B cell (primary cell): ENCODE measurements at regions of chr15 and their contacts with region 1.

Region 1: DNA sequence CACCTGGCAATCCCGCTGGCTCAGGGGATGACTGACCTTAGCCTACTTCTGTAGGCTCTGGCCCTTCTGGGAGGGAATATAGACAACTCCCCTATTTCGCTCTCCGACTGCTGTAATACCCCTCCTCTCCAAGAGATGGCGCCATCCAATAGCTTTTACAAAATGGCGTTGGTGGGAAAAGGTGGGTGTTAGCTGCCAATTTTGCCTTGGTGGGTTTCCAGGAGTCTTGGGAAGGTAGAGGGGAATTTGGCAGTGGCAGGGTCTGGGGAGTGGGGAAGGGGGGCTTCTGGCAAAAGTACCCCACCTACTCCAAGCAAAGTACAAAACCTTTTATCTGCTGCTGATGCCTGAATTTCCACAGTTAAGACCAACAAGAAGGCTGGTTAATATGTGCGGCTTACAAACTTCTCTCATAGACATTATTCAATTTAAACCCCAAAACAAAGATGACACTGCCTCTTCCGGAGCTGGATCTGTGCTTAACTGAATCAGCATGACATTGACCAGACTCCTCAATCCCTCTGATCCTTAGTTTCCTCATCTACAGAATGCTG is 62.1 kb downstream of the RASGRF1 start:
- DNase-seq: peak; percentile 62
- ATAC-seq: peak; percentile 42
- H3K4me3 ChIP-seq: no peak overlapping the region
- H3K4me3 Mint-ChIP-seq: no peak overlapping the region
- H3K27ac ChIP-seq: no peak overlapping the region
- H3K27ac Mint-ChIP-seq: no peak overlapping the region
- H3K4me1 ChIP-seq: peaks cover 5 to 9% of the 10 kb centered on the region in 2 donors
- H3K4me1 Mint-ChIP-seq: peaks cover 9% of the 10 kb centered on the region
- H3K27me3 ChIP-seq: no peaks in the 10 kb centered on the region
- H3K27me3 Mint-ChIP-seq: no peaks in the 10 kb centered on the region
- CTCF ChIP-seq: peak; percentile 83

Region 2: DNA sequence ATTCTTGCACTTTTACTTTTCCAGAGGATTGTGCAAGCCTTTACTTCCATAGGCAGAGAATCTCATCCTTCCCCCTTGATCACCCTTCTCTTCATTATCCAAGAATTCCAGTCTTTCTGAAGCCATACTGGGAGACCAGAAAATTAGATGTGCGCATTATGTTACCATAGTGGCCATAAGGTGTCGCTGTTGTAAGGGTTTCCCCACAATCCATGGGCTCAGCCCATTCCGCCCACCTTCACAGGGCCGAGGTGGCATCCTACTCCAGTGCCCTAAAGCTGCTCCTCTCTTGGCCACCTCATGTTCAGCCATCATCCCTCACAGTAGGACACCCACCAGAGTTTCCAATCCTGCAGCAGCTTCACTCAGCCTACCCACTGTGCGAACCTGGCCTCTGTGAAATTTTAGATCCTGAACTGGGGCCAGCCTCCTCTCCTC is 118.7 kb before region 1 on chr15:
- CTCF ChIA-PET with region 1: interaction called, 248 read pairs
- POLR2A ChIA-PET with region 1: interaction called, 3 read pairs
- intact Hi-C with region 1: loop called (anchors 1 kb)
- DNase-seq: peak; percentile 71
- ATAC-seq: peak; percentile 50
- H3K4me3 ChIP-seq: no peak overlapping the region
- H3K4me3 Mint-ChIP-seq: no peak overlapping the region
- H3K27ac ChIP-seq: no peak overlapping the region
- H3K27ac Mint-ChIP-seq: peak overlapping the region; percentile 18
- H3K4me1 ChIP-seq: no peaks in the 10 kb centered on the region
- H3K4me1 Mint-ChIP-seq: peaks cover 18% of the 10 kb centered on the region
- H3K27me3 ChIP-seq: no peaks in the 10 kb centered on the region
- H3K27me3 Mint-ChIP-seq: no peaks in the 10 kb centered on the region
- CTCF ChIP-seq: peak; percentile 79

Region 3: GRCh38 chr15:78927077-78927784 is 101.3 kb before region 1 on chr15:
- CTCF ChIA-PET with region 1: interaction called, 25 read pairs
- POLR2A ChIA-PET with region 1: no interaction called
- intact Hi-C with region 1: loop called (anchors 5 kb)
- DNase-seq: no peak
- ATAC-seq: no peak
- H3K4me3 ChIP-seq: no peak overlapping the region
- H3K4me3 Mint-ChIP-seq: no peak overlapping the region
- H3K27ac ChIP-seq: peak overlapping the region in 1 of 2 donors; percentile 9
- H3K27ac Mint-ChIP-seq: peak overlapping the region; percentile 21
- H3K4me1 ChIP-seq: no peaks in the 10 kb centered on the region
- H3K4me1 Mint-ChIP-seq: peaks cover 6% of the 10 kb centered on the region
- H3K27me3 ChIP-seq: no peaks in the 10 kb centered on the region
- H3K27me3 Mint-ChIP-seq: no peaks in the 10 kb centered on the region
- CTCF ChIP-seq: no peak

Region 4: GRCh38 chr15:78944669-78945407 is 83.7 kb before region 1 on chr15 and contains the start of gene CTSH:
- CTCF ChIA-PET with region 1: interaction called, 12 read pairs
- POLR2A ChIA-PET with region 1: interaction called, 5 read pairs
- intact Hi-C with region 1: no loop called
- DNase-seq: peak; percentile 91
- ATAC-seq: peak; percentile 95
- H3K4me3 ChIP-seq: peak within 1 kb of the TSS; percentile 61 to 97 (median 94)
- H3K4me3 Mint-ChIP-seq: peak within 1 kb of the TSS; percentile 98
- H3K27ac ChIP-seq: peak within 1 kb of the TSS; percentile 77 to 83
- H3K27ac Mint-ChIP-seq: peak within 1 kb of the TSS; percentile 95
- H3K4me1 ChIP-seq: peaks cover 34 to 48% of the 10 kb centered on the region in 2 donors
- H3K4me1 Mint-ChIP-seq: peaks cover 32% of the 10 kb centered on the region
- H3K27me3 ChIP-seq: no peaks in the 10 kb centered on the region
- H3K27me3 Mint-ChIP-seq: no peaks in the 10 kb centered on the region
- CTCF ChIP-seq: no peak
- total RNA-seq, gene CTSH: 438 and 441 TPM in 2 replicates

Region 5: GRCh38 chr15:79004336-79004735 is 24.2 kb before region 1 on chr15:
- CTCF ChIA-PET with region 1: interaction called, 25 read pairs
- POLR2A ChIA-PET with region 1: no interaction called
- intact Hi-C with region 1: loop called (anchors 2 kb)
- DNase-seq: peak; percentile 77
- ATAC-seq: peak; percentile 85
- H3K4me3 ChIP-seq: peak overlapping the region in 2 of 5 experiments; percentile 9 to 28
- H3K4me3 Mint-ChIP-seq: peak overlapping the region; percentile 81
- H3K27ac ChIP-seq: peak overlapping the region; percentile 58 to 60
- H3K27ac Mint-ChIP-seq: peak overlapping the region; percentile 95
- H3K4me1 ChIP-seq: peaks cover 30 to 45% of the 10 kb centered on the region in 2 donors
- H3K4me1 Mint-ChIP-seq: peaks cover 48% of the 10 kb centered on the region
- H3K27me3 ChIP-seq: no peaks in the 10 kb centered on the region
- H3K27me3 Mint-ChIP-seq: no peaks in the 10 kb centered on the region
- CTCF ChIP-seq: no peak